Aorta (tissue), 5 donors: ENCODE measurements at regions of chr11 and their contacts with region 1.

Region 1: GRCh38 chr11:114439229-114440120 is at the start of gene REXO2:
- DNase-seq: peak; percentile 97 to 99
- ATAC-seq: peak; percentile 98
- H3K4me3 ChIP-seq: peak within 1 kb of the TSS; percentile 36 to 79
- H3K27ac ChIP-seq: peak within 1 kb of the TSS in 1 of 2 donors; percentile 33
- H3K4me1 ChIP-seq: no peaks in the 10 kb centered on the region
- H3K27me3 ChIP-seq: no peaks in the 10 kb centered on the region
- total RNA-seq, gene REXO2: 103 to 109 TPM

Region 2: DNA sequence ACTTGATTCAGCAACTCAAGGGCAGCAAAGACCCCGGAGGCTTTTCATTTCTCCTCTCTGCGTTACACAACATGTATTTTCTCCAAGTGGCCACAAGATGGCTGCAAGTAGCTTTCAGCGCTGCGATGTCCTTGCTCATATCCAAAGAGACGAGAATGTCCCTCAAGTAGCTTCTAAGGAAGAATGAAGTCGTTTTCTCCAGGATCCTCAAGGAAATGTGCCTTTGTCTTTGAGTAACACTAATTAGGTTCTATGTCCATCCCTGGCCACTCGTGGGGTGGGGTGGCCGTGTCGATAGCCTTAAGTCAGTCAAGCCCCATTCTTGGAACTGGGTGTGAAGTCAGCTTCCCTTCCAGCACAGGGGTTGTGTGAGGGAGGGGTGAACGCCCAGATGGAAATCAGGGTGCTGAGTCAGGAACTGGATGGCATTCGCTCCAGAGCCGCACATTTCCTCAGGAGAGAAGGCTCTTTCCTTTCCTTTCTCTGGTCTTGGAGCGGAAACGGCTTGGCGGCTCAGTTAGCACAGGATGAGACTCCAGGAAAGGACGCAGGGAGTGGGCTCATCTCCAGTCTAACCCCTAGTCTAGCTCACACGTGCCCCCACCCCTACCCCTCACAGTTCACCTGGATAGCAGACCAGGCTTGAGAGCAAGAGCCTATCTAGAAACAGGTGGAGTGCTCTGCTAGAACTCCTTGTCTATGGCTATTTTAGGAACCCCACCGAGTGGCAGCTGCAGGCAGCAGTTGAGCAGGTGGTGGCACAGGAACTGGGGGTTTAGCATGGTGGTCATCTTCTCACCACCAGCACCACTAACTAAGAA is 99.0 kb before region 1 on chr11:
- intact Hi-C with region 1: loop called (anchors 5 to 10 kb)
- DNase-seq: peak; percentile 64 to 80
- ATAC-seq: peak; percentile 87
- H3K4me3 ChIP-seq: peak overlapping the region in 1 of 2 donors; percentile 69
- H3K27ac ChIP-seq: peak overlapping the region in 1 of 2 donors; percentile 34
- H3K4me1 ChIP-seq: no peaks in the 10 kb centered on the region
- H3K27me3 ChIP-seq: no peaks in the 10 kb centered on the region

Region 3: DNA sequence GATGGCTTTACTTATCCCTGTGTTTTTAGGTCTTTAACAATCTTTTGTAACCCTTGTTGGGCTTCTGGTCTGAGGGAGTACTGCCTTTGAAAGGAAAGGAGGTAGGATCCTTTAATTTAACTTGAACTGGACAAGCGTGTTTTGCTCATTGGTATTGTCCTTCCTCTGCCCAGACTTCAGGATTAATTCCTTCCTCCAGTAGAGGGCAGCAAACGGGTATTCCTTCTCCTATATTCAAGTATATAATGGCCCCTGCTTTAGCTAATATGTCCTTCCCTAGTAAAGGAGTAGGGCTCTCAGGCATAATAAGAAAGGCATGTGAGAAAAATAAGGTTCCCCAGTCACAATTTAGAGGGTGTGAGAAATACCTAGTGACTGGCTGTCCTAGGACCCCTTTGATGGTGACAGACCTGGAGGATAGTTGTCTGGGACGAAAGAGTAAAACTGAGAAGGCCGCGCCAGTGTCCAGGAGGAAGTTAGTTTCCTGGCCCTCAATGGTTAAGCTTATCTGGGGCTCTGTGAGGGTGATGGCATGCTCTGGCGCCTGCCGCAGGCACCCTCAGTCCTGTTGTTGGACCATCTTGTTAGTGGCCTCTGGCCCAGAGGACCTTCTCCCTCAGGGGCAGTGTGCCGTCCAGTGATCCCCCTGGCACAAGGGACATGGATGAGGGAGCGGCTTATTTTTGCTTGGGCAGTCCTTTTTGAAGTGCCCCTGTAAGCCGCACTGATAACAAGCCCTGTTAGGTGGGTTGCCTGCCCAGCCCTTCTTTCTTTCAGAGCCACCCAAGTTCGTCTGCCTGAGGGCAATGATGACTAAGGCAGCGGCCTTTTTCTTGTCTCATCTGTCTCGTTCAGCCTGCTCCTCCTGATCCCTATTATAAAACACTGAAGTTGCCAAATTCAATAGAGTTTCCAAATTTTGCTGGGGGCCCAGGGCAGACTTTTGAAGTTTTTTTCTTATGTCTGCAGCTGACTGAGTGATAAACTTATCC is 91.0 kb before region 1 on chr11:
- intact Hi-C with region 1: loop called (anchors 5 to 10 kb)
- DNase-seq: no peak
- ATAC-seq: no peak
- H3K4me3 ChIP-seq: no peak overlapping the region
- H3K27ac ChIP-seq: no peak overlapping the region
- H3K4me1 ChIP-seq: no peaks in the 10 kb centered on the region
- H3K27me3 ChIP-seq: no peaks in the 10 kb centered on the region

Region 4: DNA sequence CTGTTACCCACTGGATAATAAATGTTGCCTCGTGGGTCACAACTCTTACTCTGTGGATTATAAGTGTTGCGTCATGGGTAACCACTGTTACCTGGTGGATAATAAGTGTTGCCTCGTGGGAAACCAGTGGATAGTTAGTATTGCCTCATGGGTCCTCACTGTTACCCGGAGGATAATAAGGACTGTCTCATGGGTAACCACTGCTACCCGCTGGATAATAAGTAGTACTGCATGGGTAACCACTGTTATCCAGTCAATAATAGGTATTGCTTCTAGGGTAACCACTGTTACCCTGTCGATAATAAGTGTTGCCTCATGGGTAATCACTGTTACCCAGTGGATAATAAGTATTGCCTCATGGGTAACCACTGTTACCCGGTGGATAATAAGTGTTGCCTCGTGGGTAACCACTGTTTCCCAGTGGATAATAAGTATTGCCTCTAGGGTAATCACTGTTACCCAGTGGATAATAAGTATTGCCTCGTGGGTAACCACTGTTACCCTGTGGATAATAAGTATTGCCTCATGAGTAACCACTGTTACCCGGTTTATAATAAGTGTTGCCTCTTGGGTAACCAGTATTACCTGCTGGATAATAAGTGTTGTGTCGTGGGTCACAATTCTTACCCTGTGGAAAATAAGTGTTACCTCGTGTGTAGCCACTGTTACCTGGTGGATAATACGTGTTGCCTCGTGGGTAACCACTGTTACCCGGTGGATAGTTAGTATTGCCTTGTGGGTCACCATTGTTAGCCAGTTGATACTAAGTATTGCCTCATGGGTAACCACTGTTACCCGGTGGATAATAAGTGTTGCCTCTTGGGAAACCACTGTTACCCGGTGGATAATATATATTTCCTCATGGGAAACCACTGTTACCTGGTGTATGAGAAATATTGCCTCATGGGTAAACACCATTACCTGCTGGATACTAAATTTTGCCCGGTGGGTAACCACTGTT is 171.8 kb after region 1 on chr11:
- intact Hi-C with region 1: no loop called
- DNase-seq: no peak
- ATAC-seq: no peak
- H3K4me3 ChIP-seq: no peak overlapping the region
- H3K27ac ChIP-seq: no peak overlapping the region
- H3K4me1 ChIP-seq: no peaks in the 10 kb centered on the region
- H3K27me3 ChIP-seq: no peaks in the 10 kb centered on the region